ENCODE measurements at regions of chr1 and their contacts with region 1.

Region 1: DNA sequence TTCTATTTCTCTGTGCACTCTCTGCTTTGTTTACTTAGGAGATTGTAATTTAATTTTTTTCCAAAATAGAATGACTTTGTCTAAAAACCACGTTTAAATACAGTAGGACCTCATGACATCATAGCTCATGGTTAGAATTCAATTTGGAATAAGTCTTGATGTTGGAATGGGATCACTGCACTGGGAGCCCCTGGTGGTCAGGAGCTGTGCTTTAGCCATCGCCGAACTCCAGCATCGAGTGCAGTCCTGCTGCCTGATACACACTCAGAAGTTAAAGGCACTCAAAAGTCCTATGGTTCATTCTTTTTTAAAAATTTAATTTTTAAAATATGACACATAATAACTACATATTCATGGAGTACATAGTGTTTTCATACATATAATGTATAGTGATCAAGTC is 75.1 kb downstream of the TEX35 start:
- DNase-seq: no peak
- H3K4me3 ChIP-seq: no peak overlapping the region
- H3K27ac ChIP-seq: no peak overlapping the region
- H3K4me1 ChIP-seq: no peaks in the 10 kb centered on the region
- H3K27me3 ChIP-seq: no peaks in the 10 kb centered on the region
- CTCF ChIP-seq: no peak

Region 2: GRCh38 chr1:178548107-178548506 is 39.9 kb before region 1 on chr1:
- CTCF ChIA-PET with region 1: no interaction called
- dilution Hi-C with region 1: loop called (anchors 5 kb)
- in situ Hi-C with region 1: no loop called
- intact Hi-C with region 1: no loop called
- DNase-seq: no peak
- H3K4me3 ChIP-seq: no peak overlapping the region
- H3K27ac ChIP-seq: no peak overlapping the region
- H3K4me1 ChIP-seq: peaks cover 4% of the 10 kb centered on the region
- H3K27me3 ChIP-seq: no peaks in the 10 kb centered on the region
- CTCF ChIP-seq: peak in 1 of 2 donors; percentile 18

Region 3: DNA sequence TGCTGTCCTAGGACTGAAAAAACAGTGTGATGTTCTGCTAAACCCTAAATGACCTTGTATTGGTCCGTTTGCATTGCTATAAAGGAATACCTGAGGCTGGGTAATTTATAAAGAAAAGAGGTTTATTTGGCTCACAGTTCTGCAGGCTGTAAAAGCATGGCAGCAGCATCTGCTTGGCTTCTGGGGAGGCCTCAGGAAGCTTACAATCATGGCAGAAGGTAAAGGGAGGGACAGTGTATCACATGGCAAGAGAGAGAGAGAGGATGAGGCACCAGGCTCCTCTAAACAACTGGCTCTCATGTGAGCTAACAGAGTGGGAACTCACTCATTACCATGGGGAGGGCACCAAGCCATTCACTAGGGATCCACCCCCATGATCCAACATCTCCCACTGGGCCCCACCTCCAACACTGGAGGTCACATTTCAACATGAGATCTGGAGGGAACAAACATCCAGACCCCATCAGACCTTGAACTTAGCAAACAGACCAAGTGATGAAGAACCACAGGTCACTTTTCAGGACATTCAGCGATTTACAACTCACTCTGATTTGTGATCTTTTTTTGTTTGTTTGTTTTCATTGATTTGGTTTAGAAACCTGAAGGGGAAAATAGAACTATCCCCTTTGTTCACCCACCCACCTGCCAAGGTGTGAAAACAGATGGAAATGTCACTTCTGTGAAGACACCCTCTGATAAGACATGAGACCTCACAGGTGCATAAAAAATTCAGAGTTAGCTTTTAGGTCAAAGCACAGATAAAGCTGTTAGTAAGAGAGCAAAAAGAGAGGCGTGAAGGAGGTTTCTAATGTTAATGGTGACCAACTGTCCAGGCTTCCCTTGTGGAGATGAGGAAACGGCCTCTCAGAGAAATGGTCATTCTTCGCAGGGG is 32.9 kb after region 1 on chr1:
- CTCF ChIA-PET with region 1: no interaction called
- dilution Hi-C with region 1: loop called (anchors 5 kb)
- in situ Hi-C with region 1: no loop called
- intact Hi-C with region 1: no loop called
- DNase-seq: no peak
- H3K4me3 ChIP-seq: no peak overlapping the region
- H3K27ac ChIP-seq: no peak overlapping the region
- H3K4me1 ChIP-seq: no peaks in the 10 kb centered on the region
- H3K27me3 ChIP-seq: no peaks in the 10 kb centered on the region
- CTCF ChIP-seq: no peak

Measured in mammary epithelial cell (primary cell).